Endothelial cell of umbilical vein (primary cell): ENCODE measurements at regions of chr3 and their contacts with region 1.

Region 1: GRCh38 chr3:49007068-49007770 is at the start of gene WDR6:
- DNase-seq: peak; percentile 98
- H3K4me3 ChIP-seq: peak within 1 kb of the TSS; percentile 39 to 93 (median 46)
- H3K27ac ChIP-seq: peak within 1 kb of the TSS; percentile 57
- H3K4me1 ChIP-seq: peaks cover 15% of the 10 kb centered on the region
- H3K27me3 ChIP-seq: no peaks in the 10 kb centered on the region
- CTCF ChIP-seq: peak; percentile 22 to 30
- POLR2A ChIP-seq: peak; percentile 89
- total RNA-seq, gene WDR6: 161 and 192 TPM in 2 replicates

Region 2: DNA sequence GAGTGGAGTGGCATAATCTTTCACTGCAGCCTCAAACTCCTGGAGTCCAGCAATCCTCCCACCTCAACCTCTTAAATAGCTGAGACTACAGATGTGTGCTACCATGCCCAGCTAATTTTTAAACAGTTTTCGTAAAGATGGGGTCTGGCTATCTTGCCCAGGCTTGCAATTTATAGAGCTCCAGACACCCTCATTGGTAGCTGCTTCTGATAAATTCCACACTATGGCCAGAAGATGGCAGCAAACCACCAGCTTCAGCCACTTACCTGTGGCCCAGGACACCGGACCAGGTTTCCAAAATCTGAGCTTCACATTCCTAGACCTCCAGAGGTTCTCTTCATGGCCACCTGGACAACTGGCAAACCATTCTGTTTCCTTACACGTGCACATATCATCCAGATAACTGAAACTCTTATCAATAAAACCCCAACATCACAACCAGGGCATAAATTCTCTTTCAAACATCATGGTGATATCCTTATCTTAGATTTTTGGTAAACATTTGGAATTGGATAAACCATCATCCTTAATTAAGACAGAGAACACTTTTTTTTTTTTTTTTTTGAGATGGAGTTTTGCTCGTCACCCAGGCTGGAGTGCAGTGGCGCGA is 606.3 kb before region 1 on chr3:
- CTCF ChIA-PET with region 1: no interaction called
- POLR2A ChIA-PET with region 1: no interaction called
- dilution Hi-C with region 1: no loop called
- intact Hi-C with region 1: no loop called
- DNase-seq: peak; percentile 52
- H3K4me3 ChIP-seq: no peak overlapping the region
- H3K27ac ChIP-seq: no peak overlapping the region
- H3K4me1 ChIP-seq: peaks cover 10% of the 10 kb centered on the region
- H3K27me3 ChIP-seq: peaks cover 1% of the 10 kb centered on the region in 2 experiments
- CTCF ChIP-seq: peak; percentile 69 to 72
- POLR2A ChIP-seq: no peak

Region 3: DNA sequence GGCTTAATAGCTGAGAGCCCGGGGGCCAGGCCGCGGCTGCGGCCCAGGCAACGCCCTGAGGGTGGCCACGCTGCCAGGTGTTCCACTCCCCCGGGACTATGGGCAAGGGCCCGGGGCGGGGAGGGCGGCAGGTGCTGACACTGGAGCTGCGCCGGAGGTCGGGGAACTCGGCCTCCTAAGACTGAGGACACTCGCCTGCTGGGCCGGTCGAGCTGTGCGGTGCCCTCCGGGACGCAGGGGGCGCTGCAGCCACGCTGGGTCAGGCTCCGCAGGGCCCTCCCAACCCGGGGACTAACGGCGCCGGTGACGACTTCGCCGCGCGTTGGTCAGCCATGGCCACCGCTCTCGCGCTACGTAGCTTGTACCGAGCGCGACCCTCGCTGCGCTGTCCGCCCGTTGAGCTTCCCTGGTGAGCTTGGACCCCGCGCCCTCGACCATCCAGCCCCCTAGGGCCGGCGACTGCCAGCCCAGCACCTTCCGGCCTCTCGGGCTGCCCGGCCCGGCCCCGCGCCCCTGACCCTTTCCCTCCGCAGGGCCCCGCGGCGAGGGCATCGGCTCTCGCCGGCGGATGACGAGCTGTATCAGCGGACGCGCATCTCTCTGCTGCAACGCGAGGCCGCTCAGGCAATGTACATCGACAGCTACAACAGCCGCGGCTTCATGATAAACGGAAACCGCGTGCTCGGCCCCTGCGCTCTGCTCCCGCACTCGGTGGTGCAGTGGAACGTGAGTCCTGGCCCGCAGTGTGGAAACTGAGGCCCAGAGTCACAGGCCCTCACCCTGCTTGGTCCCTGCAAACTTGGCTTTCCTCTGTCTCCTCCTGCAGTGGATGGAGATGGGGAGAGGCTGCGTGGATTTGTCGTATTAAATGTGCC is 14.8 kb after region 1 on chr3 and contains the start of gene NDUFAF3:
- CTCF ChIA-PET with region 1: interaction called, 38 read pairs
- POLR2A ChIA-PET with region 1: interaction called, 17 read pairs
- dilution Hi-C with region 1: no loop called
- intact Hi-C with region 1: loop called (anchors 1 kb)
- DNase-seq: peak; percentile 93
- H3K4me3 ChIP-seq: peak within 1 kb of the TSS; percentile 56 to 59 (median 57)
- H3K27ac ChIP-seq: peak within 1 kb of the TSS; percentile 95
- H3K4me1 ChIP-seq: peaks cover 31% of the 10 kb centered on the region
- H3K27me3 ChIP-seq: no peaks in the 10 kb centered on the region
- CTCF ChIP-seq: peak; percentile 99
- POLR2A ChIP-seq: peak; percentile 96
- total RNA-seq, gene NDUFAF3: 74.5 and 91.1 TPM in 2 replicates

Region 4: GRCh38 chr3:49028673-49029562 is 21.7 kb after region 1 on chr3 and contains the start of gene IMPDH2:
- CTCF ChIA-PET with region 1: interaction called, 38 read pairs
- POLR2A ChIA-PET with region 1: interaction called, 10 read pairs
- dilution Hi-C with region 1: no loop called
- intact Hi-C with region 1: loop called (anchors 1 kb)
- DNase-seq: peak; percentile 97
- H3K4me3 ChIP-seq: peak within 1 kb of the TSS; percentile 7 to 66 (median 44)
- H3K27ac ChIP-seq: peak within 1 kb of the TSS; percentile 30
- H3K4me1 ChIP-seq: peaks cover 11% of the 10 kb centered on the region
- H3K27me3 ChIP-seq: no peaks in the 10 kb centered on the region
- CTCF ChIP-seq: peak in 1 of 2 donors; percentile 3
- POLR2A ChIP-seq: peak; percentile 99
- total RNA-seq, gene IMPDH2: 189 and 195 TPM in 2 replicates